ENCODE measurements at regions of chr1 and their contacts with region 1.

Region 1: GRCh38 chr1:37859507-37860345 is at the start of gene MTF1:
- DNase-seq: peak; percentile 79
- H3K4me3 ChIP-seq: peak within 1 kb of the TSS; percentile 71
- H3K27me3 ChIP-seq: no peaks in the 10 kb centered on the region
- CTCF ChIP-seq: peak; percentile 88
- polyA plus RNA-seq, gene MTF1: 6.9 and 7.7 TPM in 2 replicates

Region 2: GRCh38 chr1:37822906-37823815 is 36.6 kb before region 1 on chr1:
- CTCF ChIA-PET with region 1: no interaction called
- POLR2A ChIA-PET with region 1: no interaction called
- DNase-seq: no peak
- H3K4me3 ChIP-seq: no peak overlapping the region
- H3K27me3 ChIP-seq: no peaks in the 10 kb centered on the region
- CTCF ChIP-seq: no peak

Region 3: GRCh38 chr1:37875834-37876233 is 16.1 kb after region 1 on chr1:
- CTCF ChIA-PET with region 1: interaction called, 15 read pairs
- POLR2A ChIA-PET with region 1: no interaction called
- DNase-seq: no peak
- H3K4me3 ChIP-seq: no peak overlapping the region
- H3K27me3 ChIP-seq: no peaks in the 10 kb centered on the region
- CTCF ChIP-seq: no peak